ENCODE measurements at regions of chr16 and their contacts with region 1.

Region 1: DNA sequence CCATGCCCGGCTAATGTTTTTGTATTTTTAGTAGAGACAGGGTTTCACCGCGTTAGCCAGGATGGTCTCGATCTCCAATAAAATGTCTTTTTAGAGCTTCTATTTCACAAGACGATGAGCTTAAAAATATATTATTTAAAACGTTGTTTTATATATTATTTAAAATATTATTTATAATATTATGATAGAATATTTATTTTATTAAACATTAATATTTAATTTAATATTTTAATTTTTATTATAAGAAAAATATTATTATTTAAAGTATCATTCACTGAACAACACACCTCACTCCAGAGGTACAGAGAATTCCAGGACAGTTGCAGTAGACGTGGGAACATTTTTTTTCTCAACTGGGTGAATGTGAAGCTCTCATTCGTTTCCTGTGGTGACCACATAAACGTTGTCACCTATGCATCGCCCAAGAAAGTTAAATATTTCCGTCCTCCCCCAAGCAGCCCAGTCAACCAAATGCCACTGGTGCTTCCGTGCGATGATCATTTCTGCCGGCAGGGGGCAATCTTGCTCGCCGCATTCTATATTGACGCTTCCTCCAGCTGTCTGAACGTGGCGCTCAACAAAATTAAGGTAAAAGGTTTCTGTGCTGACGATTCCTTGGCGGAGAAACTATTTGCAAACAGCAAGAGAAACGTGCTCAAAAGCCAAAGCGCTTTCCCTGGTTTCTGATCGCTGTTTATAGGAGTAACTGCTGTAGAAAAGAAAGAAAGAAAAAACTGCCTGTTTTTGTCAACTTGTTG is 41.7 kb upstream of the PRSS54 start:
- DNase-seq: peak; percentile 52 to 55
- ATAC-seq: peak; percentile 76 to 84
- H3K4me3 ChIP-seq: peak overlapping the region; percentile 27 to 42 (median 34)
- H3K27ac ChIP-seq: peak overlapping the region in 2 of 4 donors; percentile 11 to 13
- H3K4me1 ChIP-seq: peaks cover 0 to 7% of the 10 kb centered on the region in 2 donors
- H3K27me3 ChIP-seq: no peaks in the 10 kb centered on the region
- CTCF ChIP-seq: peak; percentile 69 to 93 (median 85)
- POLR2A ChIP-seq: no peak

Region 2: GRCh38 chr16:58481931-58482330 is 145.4 kb after region 1 on chr16:
- in situ Hi-C with region 1: loop called in 3 of 4 experiments (anchors 5 kb)
- intact Hi-C with region 1: loop called (anchors 1 kb)
- DNase-seq: no peak
- ATAC-seq: no peak
- H3K4me3 ChIP-seq: no peak overlapping the region
- H3K27ac ChIP-seq: no peak overlapping the region
- H3K4me1 ChIP-seq: no peaks in the 10 kb centered on the region
- H3K27me3 ChIP-seq: no peaks in the 10 kb centered on the region
- CTCF ChIP-seq: no peak
- POLR2A ChIP-seq: no peak

Region 3: DNA sequence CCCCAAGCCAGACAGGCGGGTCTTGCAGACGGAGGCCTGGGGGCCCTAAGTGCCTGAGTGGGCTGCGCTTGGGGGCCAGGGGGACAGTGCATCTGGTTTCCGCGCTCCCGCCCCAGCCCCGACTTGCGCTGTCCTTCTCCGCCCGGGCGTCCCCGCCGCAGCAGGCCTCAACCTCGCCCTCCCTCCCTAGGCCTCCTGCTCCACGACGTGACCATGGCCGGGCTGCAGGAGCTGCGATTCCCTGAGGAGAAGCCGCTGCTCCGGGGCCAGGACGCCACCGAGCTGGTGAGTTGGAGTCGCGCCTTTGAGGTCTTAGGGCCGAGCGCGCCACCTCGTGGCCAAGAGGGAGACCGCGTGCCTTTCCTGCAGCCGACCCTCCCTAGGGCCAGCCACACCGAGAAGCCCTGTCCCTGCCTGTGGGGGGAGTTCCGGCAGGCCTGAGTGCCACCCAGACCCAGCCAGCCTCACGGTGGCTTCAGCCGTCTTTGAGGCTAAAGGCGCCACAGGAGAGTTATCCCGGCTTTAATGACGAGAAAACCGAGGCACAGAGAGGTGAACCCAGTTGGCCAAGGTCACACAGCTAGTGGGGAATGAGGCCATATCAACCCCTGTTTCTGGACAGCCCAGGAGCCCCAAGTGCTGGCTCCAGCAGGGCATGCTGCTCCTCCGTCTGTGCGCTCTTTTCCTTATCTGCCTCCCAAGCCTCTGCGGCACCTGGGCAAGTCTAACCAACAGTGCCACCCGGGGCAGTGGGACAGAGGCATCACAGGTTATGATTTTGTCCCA is 151.2 kb after region 1 on chr16:
- in situ Hi-C with region 1: loop called (anchors 5 kb)
- intact Hi-C with region 1: loop called (anchors 1 kb)
- DNase-seq: peak; percentile 62 to 64
- ATAC-seq: peak; percentile 89 to 91
- H3K4me3 ChIP-seq: peak overlapping the region; percentile 8 to 47 (median 40)
- H3K27ac ChIP-seq: no peak overlapping the region
- H3K4me1 ChIP-seq: peaks cover 0 to 4% of the 10 kb centered on the region in 2 donors
- H3K27me3 ChIP-seq: no peaks in the 10 kb centered on the region
- CTCF ChIP-seq: peak; percentile 83 to 94 (median 89)
- POLR2A ChIP-seq: no peak

Region 4: DNA sequence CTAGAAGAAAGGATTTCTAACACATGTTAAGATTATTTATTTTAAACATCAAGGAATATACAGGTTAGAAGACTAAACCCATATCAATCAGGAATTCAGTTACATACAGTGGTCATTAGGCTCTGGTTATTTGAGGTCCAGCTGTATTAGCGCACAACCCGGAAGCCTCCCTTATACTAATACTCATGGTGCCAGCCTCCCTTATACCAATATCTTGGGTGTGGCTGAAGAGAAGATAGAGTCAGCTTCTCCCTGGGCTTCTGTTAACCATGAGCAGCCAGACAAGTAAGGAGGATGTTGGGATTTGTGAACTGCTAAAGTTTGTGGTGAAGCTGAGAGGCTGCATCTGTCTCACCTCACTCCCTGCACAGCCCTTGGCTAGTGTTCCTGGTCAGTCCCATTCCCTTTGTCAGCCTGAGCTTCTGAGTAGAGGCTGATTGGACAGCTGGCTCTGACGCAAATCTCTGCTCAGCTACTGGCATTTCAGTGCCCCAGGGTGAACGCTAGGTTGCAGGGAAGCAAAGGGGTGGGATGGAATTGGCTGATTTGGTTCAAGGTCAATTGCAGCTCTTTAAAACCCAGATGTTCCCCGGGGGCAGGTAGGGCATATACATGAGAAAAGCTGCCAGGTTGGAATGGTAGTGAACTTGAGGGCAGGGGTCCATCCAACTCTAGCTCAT is 316.1 kb after region 1 on chr16:
- in situ Hi-C with region 1: loop called in 3 of 4 experiments (anchors 10 to 25 kb)
- intact Hi-C with region 1: no loop called
- DNase-seq: no peak
- ATAC-seq: no peak
- H3K4me3 ChIP-seq: no peak overlapping the region
- H3K27ac ChIP-seq: no peak overlapping the region
- H3K4me1 ChIP-seq: no peaks in the 10 kb centered on the region
- H3K27me3 ChIP-seq: no peaks in the 10 kb centered on the region
- CTCF ChIP-seq: no peak
- POLR2A ChIP-seq: no peak

Region 5: DNA sequence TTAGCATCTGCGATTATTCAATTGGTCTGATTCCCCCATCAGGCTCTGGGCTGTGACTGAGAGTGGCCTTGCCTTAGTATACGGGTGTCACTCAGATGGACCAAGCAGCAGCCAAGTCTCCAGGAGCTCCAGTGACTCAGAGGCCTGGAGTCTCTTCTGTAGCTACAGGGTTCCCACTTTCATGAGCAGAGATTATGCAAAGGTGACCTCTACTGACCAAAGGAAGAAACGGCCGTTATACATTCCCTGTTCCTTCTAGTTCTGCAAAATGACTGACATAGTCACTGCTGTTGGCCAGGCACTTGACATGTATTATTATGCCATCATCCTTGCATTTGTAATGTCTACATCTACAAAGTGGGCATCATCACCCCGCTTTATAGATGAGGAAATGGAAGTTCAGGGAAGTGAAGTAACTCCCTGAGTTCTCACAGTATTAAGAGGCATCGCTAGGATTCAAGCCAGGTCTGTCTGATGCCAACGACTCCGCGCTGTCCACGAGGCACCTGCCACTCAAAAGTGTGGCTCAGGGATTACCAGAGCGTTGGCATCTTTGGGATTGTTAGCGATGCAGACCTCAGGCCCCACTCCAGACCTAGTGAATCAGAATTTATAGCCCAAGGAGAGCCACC is 324.8 kb after region 1 on chr16:
- in situ Hi-C with region 1: loop called (anchors 10 to 25 kb)
- intact Hi-C with region 1: loop called (anchors 1 kb)
- DNase-seq: peak; percentile 58 to 77
- ATAC-seq: peak; percentile 100
- H3K4me3 ChIP-seq: no peak overlapping the region
- H3K27ac ChIP-seq: no peak overlapping the region
- H3K4me1 ChIP-seq: no peaks in the 10 kb centered on the region
- H3K27me3 ChIP-seq: no peaks in the 10 kb centered on the region
- CTCF ChIP-seq: peak in 4 of 5 experiments; percentile 36 to 55 (median 46)
- POLR2A ChIP-seq: no peak

Region 6: GRCh38 chr16:58755989-58756649 is 419.6 kb after region 1 on chr16:
- in situ Hi-C with region 1: loop called in 3 of 4 experiments (anchors 25 kb)
- intact Hi-C with region 1: loop called (anchors 1 kb)
- DNase-seq: peak; percentile 48 to 62
- ATAC-seq: peak; percentile 89 to 94
- H3K4me3 ChIP-seq: no peak overlapping the region
- H3K27ac ChIP-seq: no peak overlapping the region
- H3K4me1 ChIP-seq: peaks cover 0 to 3% of the 10 kb centered on the region in 2 donors
- H3K27me3 ChIP-seq: no peaks in the 10 kb centered on the region
- CTCF ChIP-seq: peak; percentile 48 to 71 (median 64)
- POLR2A ChIP-seq: no peak